Psoas muscle (tissue), 8 donors: ENCODE measurements at regions of chr3 and their contacts with region 1.

Region 1: DNA sequence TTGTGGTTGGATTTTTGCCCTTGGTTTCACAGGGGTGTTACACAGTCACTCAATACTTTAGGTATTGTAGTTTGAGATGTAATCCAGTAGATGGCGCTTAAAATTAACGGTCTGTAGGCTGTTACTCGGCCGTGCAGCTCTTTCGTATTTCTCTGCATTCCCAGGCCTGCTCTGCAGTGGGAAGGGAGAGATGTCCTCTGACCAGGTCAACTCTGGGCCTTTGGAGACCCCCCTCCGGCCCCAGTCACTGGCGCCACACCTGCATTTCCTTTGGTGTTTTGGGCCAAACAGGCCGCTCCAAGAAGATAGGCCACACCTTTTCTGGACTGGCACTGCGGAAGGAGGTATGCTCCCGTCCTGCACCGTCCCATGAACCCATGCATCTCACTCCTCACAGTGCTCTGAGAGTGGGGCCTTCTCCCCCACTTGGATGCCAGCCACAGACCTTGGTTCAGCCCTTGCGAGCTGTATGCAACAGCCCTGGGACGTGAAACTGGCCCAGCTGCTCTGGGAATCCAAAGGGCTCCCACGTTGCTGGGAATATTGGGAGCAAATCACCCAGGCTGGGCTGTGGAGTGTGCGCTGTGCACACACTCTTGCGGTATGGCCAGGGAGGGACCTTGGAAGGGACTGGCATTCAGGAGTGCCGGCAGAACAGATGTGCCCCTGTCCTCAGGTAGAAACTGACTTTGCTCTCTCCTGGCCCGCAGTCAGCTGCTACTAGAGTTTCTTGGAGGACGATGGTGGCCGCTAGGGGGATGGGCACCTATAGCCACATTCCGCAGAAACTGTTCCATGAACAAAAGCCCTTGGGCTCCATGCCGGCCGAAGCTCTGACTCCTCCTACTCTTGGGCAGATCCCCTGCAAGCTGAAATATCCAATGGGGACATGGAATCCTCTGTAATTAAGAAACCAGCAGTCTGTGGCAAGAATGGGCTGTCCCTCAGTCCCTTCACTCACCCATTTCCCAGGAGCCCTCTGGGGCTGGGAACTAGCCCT is 410.5 kb upstream of the CADM2 start:
- DNase-seq: peak; percentile 10 to 48
- ATAC-seq: peak; percentile 74 to 86 (median 80)
- H3K4me3 ChIP-seq: peak overlapping the region; percentile 16
- H3K27ac ChIP-seq: no peak overlapping the region
- H3K4me1 ChIP-seq: no peaks in the 10 kb centered on the region
- H3K27me3 ChIP-seq: no peaks in the 10 kb centered on the region
- CTCF ChIP-seq: peak; percentile 47

Region 2: GRCh38 chr3:84318273-84318809 is 229.9 kb before region 1 on chr3:
- intact Hi-C with region 1: no loop called
- DNase-seq: no peak
- ATAC-seq: no peak
- H3K4me3 ChIP-seq: no peak overlapping the region
- H3K27ac ChIP-seq: no peak overlapping the region
- H3K4me1 ChIP-seq: no peaks in the 10 kb centered on the region
- H3K27me3 ChIP-seq: no peaks in the 10 kb centered on the region
- CTCF ChIP-seq: no peak

Region 3: GRCh38 chr3:84965141-84965540 is 416.9 kb after region 1 on chr3:
- intact Hi-C with region 1: loop called in 1 of 2 experiments (anchors 10 kb)
- DNase-seq: no peak
- ATAC-seq: peak; percentile 42 to 58 (median 53)
- H3K4me3 ChIP-seq: peak overlapping the region; percentile 54
- H3K27ac ChIP-seq: peak overlapping the region; percentile 51
- H3K4me1 ChIP-seq: no peaks in the 10 kb centered on the region
- H3K27me3 ChIP-seq: peaks cover 0 to 13% (median 0%) of the 10 kb centered on the region in 3 donors
- CTCF ChIP-seq: peak; percentile 30

Region 4: GRCh38 chr3:85355572-85355971 is 807.3 kb after region 1 on chr3:
- intact Hi-C with region 1: loop called (anchors 5 kb)
- DNase-seq: no peak
- ATAC-seq: no peak
- H3K4me3 ChIP-seq: no peak overlapping the region
- H3K27ac ChIP-seq: no peak overlapping the region
- H3K4me1 ChIP-seq: no peaks in the 10 kb centered on the region
- H3K27me3 ChIP-seq: no peaks in the 10 kb centered on the region
- CTCF ChIP-seq: no peak

Region 5: DNA sequence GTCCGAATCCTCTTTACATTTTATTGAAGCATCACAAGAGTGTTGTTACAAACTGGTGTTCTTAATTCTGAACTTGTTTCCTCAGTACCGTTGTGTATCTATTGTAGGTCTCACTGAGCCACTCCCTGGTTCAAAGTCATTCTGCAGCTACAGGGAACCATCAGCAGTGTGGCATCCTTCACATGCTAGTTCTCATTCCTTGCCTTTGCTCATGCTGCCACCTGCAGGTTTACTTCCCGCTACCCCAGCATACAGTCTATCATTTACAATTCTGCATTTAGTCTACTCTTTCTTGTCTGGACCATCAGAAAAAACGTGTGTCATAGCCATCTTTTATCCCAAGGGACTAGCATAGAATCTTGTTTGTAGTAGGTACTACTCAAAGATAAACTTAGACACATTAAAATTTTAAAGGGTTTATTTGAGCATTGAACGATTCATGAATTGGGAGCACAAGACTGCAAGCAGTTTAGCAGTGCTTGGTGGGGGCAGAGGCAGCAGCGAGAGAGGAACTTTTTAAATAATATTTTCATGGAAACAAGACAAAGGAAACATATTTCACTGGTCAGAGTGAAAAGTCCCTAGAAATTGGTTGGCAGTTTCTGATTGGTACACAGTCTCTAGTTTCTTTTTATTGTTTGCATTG is 812.6 kb after region 1 on chr3:
- intact Hi-C with region 1: loop called (anchors 5 kb)
- DNase-seq: peak in 1 of 2 donors; percentile 21
- ATAC-seq: peak; percentile 59 to 86 (median 78)
- H3K4me3 ChIP-seq: no peak overlapping the region
- H3K27ac ChIP-seq: no peak overlapping the region
- H3K4me1 ChIP-seq: no peaks in the 10 kb centered on the region
- H3K27me3 ChIP-seq: no peaks in the 10 kb centered on the region
- CTCF ChIP-seq: peak; percentile 56

Region 6: DNA sequence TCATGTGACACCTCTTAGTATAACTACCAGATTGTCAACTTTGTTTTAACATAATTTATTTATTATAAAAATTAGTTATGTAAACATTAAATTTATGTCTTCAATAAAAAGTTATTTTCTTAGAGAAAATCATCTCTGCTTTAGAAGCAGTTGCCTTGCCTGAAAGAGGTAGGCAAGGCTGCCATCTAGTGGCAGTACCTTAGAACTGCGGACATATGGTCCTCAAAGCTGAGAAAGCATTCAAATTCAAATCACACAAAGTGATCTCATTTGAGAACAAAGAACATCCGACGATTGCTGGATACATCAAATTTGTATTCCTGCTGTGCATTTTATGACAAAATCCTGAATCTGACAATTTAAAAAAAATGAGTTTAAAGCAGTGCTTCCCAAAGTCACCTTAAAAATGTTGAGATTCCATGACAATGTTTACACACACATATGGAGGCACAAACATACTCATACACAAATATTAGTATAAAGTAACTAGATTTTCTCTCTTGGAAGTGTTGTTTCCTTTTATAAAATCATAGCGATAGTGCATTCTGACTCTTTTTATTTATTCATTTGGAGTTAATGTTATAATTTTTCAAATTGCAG is 1027.9 kb after region 1 on chr3:
- intact Hi-C with region 1: loop called (anchors 5 kb)
- DNase-seq: peak; percentile 28 to 54
- ATAC-seq: peak in 2 of 4 donors; percentile 67 to 74
- H3K4me3 ChIP-seq: no peak overlapping the region
- H3K27ac ChIP-seq: no peak overlapping the region
- H3K4me1 ChIP-seq: no peaks in the 10 kb centered on the region
- H3K27me3 ChIP-seq: no peaks in the 10 kb centered on the region
- CTCF ChIP-seq: peak; percentile 94